WTC11 (cell line): ENCODE measurements at regions of chr1 and their contacts with region 1.

Region 1: DNA sequence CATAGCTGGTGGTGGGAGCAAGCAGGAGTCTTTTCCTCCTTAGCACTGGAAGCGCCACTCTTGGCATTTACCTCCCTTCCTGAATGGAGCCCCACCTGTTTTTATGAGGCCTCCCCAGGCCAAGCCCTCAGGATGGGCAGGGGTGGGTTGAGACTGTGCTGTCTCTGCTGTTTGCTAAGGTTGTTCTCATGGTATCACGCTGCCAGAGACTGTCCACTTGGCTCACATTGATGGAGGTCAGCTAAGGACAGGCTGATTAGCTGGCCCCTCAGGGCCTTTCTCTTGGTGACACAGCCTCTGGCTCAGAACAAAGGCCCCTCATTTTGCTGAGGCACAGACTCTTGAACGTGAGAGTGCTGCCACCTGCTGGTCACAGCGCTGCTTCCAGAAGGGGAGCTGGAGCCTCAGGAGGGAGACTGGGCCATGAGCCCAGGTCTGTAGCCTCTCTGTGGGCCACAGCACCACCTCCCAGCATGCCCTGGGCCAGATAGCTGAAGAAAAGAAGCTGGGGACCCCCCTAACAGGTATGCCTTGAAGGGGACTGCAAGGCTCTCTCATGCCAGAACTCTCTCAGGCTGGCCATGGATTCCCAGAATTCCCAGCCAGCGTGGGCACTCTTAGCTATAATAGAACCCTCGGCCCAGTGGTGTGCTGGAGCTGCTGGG is 85.6 kb downstream of the CD58 start:
- DNase-seq: peak; percentile 94
- ATAC-seq: peak; percentile 97
- H3K4me3 Mint-ChIP-seq: no peak overlapping the region
- H3K27ac Mint-ChIP-seq: no peak overlapping the region
- H3K4me1 Mint-ChIP-seq: peaks cover 11% of the 10 kb centered on the region
- H3K27me3 Mint-ChIP-seq: no peaks in the 10 kb centered on the region
- CTCF ChIP-seq: peak; percentile 81

Region 2: GRCh38 chr1:116151739-116152576 is 333.2 kb before region 1 on chr1:
- CTCF ChIA-PET with region 1: interaction called, 20 read pairs
- POLR2A ChIA-PET with region 1: no interaction called
- DNase-seq: peak; percentile 78
- ATAC-seq: peak; percentile 95
- H3K4me3 Mint-ChIP-seq: peak overlapping the region; percentile 63
- H3K27ac Mint-ChIP-seq: no peak overlapping the region
- H3K4me1 Mint-ChIP-seq: peaks cover 8% of the 10 kb centered on the region
- H3K27me3 Mint-ChIP-seq: peaks cover 23% of the 10 kb centered on the region
- CTCF ChIP-seq: peak; percentile 74

Region 3: DNA sequence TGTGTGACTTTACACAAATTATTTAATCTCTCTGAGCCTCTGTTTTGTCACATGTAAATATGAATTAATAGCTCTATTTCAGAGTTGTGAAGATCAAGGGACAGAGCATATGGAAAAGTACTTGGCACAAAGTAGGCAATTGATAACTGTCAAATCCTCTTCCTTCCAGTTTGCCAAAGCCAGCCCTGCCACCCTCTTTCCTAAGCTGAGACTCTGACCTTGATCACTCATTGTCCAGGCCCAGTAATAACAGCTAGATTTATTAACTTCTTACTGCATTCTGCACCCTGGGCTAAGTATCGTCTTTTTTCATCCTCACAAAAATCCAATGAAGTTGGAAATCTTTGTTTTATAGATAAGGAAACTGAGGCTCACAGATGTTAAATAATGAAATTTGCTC is 182.9 kb before region 1 on chr1:
- CTCF ChIA-PET with region 1: no interaction called
- POLR2A ChIA-PET with region 1: no interaction called
- DNase-seq: no peak
- ATAC-seq: no peak
- H3K4me3 Mint-ChIP-seq: no peak overlapping the region
- H3K27ac Mint-ChIP-seq: no peak overlapping the region
- H3K4me1 Mint-ChIP-seq: no peaks in the 10 kb centered on the region
- H3K27me3 Mint-ChIP-seq: peaks cover 4% of the 10 kb centered on the region; the same call in 1 of the 2 replicates
- CTCF ChIP-seq: no peak

Region 4: DNA sequence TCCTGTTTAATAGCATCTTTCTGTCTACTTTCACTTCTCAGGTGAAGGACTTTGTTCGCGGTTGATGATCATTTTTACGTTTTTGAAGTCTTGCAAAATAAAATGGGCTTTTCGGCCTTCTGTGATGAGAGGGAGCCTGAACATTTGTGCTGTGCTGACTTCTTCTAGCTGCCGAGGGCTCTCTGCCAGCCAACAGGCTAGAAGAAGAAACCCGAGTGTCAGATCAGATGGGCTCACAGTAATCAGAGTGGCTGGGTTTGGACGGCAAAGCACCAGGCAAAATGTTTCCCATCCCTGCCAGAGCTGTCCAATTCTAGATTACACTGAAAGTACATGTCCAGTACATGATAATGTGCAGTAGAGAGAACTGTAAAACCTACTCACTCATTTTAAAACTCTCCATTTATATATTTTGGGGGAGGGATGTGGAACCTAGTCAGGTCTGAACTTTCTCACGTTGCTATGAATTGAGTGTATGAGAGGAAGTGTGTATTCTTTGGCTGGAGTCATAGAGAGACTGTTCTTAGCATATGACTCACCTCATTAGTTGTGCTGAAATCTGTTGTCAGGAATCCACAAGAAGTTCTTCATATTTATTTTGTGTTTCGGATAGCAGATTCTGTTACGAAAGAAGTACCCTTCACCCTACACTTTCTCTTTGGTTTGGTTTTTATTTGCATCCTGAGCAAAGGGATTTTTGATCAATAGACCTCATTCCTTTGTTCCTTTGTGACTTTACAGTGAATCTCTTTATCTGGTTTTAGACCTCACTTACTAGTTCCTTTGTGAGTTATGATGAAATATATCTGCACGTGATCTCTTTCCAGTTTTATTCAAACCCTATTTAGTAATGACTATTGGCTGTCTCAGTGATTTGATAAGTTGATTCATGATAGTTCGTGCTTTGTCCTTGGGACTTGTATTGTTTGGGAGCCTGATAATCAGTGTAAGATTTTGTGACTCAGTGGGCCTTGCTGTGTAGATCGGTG is 107.4 kb before region 1 on chr1:
- CTCF ChIA-PET with region 1: interaction called, 29 read pairs
- POLR2A ChIA-PET with region 1: interaction called, 4 read pairs
- DNase-seq: no peak
- ATAC-seq: no peak
- H3K4me3 Mint-ChIP-seq: no peak overlapping the region
- H3K27ac Mint-ChIP-seq: peak overlapping the region; percentile 1; the same call in 1 of the 2 replicates
- H3K4me1 Mint-ChIP-seq: peaks cover 82% of the 10 kb centered on the region
- H3K27me3 Mint-ChIP-seq: no peaks in the 10 kb centered on the region
- CTCF ChIP-seq: no peak

Region 5: DNA sequence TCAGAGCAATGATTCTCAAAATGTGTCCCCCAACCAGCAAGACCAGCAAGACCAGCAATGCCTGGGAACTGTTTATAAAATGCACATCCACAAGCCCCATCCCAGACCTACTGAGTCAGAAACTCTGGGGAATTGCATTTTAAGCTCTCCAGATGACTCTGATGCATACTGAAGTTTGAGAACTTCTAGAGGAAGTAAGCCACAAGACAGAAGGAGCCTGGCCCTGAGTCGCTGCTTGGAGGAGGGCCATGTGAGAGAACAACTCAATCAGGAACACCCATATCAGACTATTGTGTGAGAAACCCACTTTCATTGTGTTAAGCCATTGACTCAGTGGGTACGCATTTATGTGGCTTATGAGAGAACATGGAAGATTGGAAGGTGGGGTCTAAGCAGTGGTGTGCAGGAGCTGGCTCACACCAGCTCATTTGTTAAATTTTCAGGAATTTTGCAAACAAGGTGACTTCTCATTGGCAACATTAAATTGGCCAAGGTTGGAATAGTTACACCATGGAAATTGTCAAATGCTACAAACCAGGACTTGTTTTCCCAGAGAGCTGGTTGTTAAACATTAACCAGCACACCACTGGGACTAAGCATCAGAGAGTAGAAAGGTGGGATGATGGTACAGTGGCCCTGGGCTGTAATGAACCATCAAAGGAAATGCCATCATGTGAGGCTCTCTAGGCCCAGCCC is 73.3 kb before region 1 on chr1:
- CTCF ChIA-PET with region 1: interaction called, 62 read pairs
- POLR2A ChIA-PET with region 1: no interaction called
- DNase-seq: no peak
- ATAC-seq: no peak
- H3K4me3 Mint-ChIP-seq: no peak overlapping the region
- H3K27ac Mint-ChIP-seq: no peak overlapping the region
- H3K4me1 Mint-ChIP-seq: peaks cover 13% of the 10 kb centered on the region
- H3K27me3 Mint-ChIP-seq: no peaks in the 10 kb centered on the region
- CTCF ChIP-seq: no peak

Region 6: DNA sequence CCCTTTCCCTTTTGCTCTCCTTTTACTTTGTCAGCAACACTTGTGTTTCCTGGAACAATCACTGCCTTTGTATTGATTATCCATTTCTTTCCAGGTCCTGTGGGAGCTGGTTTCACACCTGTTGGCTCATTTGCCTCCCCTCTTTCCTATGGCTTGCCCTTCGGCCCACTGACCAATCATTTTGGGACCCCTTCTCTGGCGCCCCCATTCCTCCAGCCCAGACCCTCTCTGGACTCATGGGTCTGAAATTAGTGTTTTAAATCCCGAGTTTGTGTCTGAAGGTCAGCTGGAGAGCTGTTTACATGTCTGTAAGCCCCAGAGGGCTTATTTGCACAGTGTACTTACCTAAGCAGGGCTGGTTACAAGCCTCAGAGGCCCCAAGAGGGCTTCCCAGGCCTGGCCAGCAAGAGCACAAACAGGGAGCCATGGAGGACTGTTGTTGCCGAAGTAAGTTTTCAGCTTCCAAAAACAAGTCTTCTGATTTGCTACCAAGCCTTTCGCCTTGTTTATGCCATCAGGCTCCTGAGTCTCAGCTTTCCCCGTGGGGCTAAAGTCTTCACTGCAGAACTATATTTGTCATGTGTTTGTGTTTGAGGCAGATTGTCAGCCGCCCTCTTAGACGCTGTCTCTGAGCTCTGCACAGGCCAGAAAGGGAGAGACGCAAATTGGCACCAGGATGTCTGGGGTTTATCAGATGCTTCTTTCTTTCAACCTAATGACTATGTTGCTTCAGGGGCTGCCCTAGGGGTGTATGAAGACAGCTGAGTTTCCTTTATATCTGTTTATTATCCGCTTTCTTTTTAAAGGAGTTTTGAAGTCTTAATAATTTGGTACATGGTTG is 19.1 kb before region 1 on chr1:
- CTCF ChIA-PET with region 1: interaction called, 24 read pairs
- POLR2A ChIA-PET with region 1: no interaction called
- DNase-seq: no peak
- ATAC-seq: no peak; the same call in 1 of the 2 replicates
- H3K4me3 Mint-ChIP-seq: no peak overlapping the region
- H3K27ac Mint-ChIP-seq: no peak overlapping the region; the same call in 1 of the 2 replicates
- H3K4me1 Mint-ChIP-seq: no peaks in the 10 kb centered on the region
- H3K27me3 Mint-ChIP-seq: no peaks in the 10 kb centered on the region
- CTCF ChIP-seq: no peak